Caco-2 (cell line): ENCODE measurements at regions of chr10 and their contacts with region 1.

Region 1: GRCh38 chr10:3887885-3888476 is 103.0 kb upstream of the KLF6 start:
- DNase-seq: peak; percentile 77 to 89
- H3K4me3 ChIP-seq: no peak overlapping the region
- H3K4me3 Mint-ChIP-seq: peak overlapping the region; percentile 63
- H3K27ac Mint-ChIP-seq: peak overlapping the region; percentile 96
- H3K4me1 ChIP-seq: peaks cover 70% of the 10 kb centered on the region
- H3K4me1 Mint-ChIP-seq: peaks cover 61% of the 10 kb centered on the region
- H3K27me3 ChIP-seq: no peaks in the 10 kb centered on the region
- H3K27me3 Mint-ChIP-seq: no peaks in the 10 kb centered on the region
- CTCF ChIP-seq: no peak

Region 2: GRCh38 chr10:3811291-3811870 is 76.6 kb before region 1 on chr10:
- CTCF ChIA-PET with region 1: interaction called, 3 read pairs
- POLR2A ChIA-PET with region 1: interaction called, 3 read pairs
- intact Hi-C with region 1: loop called (anchors 1 kb)
- DNase-seq: no peak
- H3K4me3 ChIP-seq: no peak overlapping the region
- H3K4me3 Mint-ChIP-seq: peak overlapping the region; percentile 20
- H3K27ac Mint-ChIP-seq: peak overlapping the region; percentile 84
- H3K4me1 ChIP-seq: peaks cover 73% of the 10 kb centered on the region
- H3K4me1 Mint-ChIP-seq: peaks cover 67% of the 10 kb centered on the region
- H3K27me3 ChIP-seq: no peaks in the 10 kb centered on the region
- H3K27me3 Mint-ChIP-seq: no peaks in the 10 kb centered on the region
- CTCF ChIP-seq: no peak

Region 3: DNA sequence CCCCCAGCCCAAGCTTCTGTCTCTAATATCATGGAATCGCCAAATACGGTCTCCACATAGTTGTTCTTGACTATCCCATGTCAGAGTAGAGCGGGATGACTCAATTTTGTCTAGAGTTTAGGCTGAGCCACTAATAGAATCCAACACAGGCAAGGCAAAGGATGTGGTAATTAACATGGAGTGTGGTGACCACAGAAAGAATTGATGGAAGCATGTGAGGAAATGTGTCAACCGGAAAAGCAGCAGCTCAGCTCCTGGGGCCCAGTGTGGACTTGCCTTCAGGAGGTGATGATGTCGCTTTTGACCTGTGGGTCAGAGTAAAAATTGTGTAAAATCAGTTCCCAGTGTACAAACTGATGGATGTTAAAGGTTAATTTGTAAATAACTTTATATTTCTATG is 36.4 kb after region 1 on chr10:
- CTCF ChIA-PET with region 1: no interaction called
- POLR2A ChIA-PET with region 1: no interaction called
- intact Hi-C with region 1: no loop called
- DNase-seq: no peak
- H3K4me3 ChIP-seq: no peak overlapping the region
- H3K4me3 Mint-ChIP-seq: no peak overlapping the region
- H3K27ac Mint-ChIP-seq: no peak overlapping the region
- H3K4me1 ChIP-seq: peaks cover 6% of the 10 kb centered on the region; the same call in 1 of the 2 replicates
- H3K4me1 Mint-ChIP-seq: no peaks in the 10 kb centered on the region
- H3K27me3 ChIP-seq: no peaks in the 10 kb centered on the region
- H3K27me3 Mint-ChIP-seq: no peaks in the 10 kb centered on the region
- CTCF ChIP-seq: no peak

Region 4: GRCh38 chr10:3995302-3996210 is 107.6 kb after region 1 on chr10:
- CTCF ChIA-PET with region 1: no interaction called
- POLR2A ChIA-PET with region 1: no interaction called
- intact Hi-C with region 1: no loop called
- DNase-seq: no peak
- H3K4me3 ChIP-seq: no peak overlapping the region
- H3K4me3 Mint-ChIP-seq: no peak overlapping the region
- H3K27ac Mint-ChIP-seq: no peak overlapping the region
- H3K4me1 ChIP-seq: no peaks in the 10 kb centered on the region
- H3K4me1 Mint-ChIP-seq: peaks cover 7% of the 10 kb centered on the region
- H3K27me3 ChIP-seq: no peaks in the 10 kb centered on the region
- H3K27me3 Mint-ChIP-seq: no peaks in the 10 kb centered on the region
- CTCF ChIP-seq: no peak